HepG2 (cell line): ENCODE measurements at regions of chr17 and their contacts with region 1.

Region 1: DNA sequence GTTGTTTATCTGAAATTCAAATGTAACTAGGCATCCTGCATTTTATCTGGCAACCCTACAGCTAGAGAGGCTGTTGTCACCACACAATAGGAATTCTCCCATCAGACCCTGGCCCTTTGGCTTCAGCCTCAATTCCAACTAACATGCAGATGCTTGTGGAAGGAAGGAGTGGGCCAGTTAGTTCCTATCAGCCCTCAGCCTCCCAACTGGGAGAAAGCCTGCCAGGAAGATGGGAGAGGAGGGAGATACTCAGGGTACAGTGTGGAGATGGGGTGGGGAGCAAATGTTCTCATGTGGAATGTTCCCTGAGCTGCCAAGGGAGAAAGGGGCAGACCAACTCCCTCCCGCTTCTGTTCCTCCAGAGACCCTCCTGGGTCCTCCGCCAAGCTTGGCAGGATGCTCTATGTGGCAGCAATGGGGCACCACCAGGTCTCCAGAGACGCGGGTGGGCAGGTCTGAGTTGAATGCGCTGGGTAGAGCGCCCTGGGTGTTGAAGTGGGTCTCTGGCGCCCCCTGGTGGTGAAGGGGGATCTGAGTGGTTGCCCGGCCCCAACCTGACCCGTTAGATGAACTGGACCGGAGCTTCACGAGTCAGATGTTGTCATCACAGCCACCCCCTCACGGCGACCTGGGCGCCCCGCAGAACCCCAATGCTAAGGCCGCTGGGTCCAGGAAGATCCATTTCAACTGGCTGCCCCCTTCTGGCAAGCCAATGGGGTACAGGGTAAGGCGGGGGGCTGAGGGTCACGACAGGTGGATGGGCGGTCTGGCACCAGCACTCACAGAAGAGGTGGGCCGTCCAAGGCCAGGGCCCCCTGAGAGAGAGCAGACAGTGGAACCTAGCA is 15.2 kb downstream of the GALK1 start:
- DNase-seq: peak; percentile 67
- ATAC-seq: peak; percentile 59
- H3K4me3 ChIP-seq: peak overlapping the region in 1 of 3 experiments; percentile 64; a peak in 1 of 6 replicates
- H3K27ac ChIP-seq: no peak overlapping the region
- H3K4me1 ChIP-seq: peaks cover 46% of the 10 kb centered on the region
- H3K27me3 ChIP-seq: no peaks in the 10 kb centered on the region
- CTCF ChIP-seq: peak; percentile 98
- EP300 ChIP-seq: no peak
- POLR2A ChIP-seq: no peak
- RAD21 ChIP-seq: peak; percentile 93

Region 2: DNA sequence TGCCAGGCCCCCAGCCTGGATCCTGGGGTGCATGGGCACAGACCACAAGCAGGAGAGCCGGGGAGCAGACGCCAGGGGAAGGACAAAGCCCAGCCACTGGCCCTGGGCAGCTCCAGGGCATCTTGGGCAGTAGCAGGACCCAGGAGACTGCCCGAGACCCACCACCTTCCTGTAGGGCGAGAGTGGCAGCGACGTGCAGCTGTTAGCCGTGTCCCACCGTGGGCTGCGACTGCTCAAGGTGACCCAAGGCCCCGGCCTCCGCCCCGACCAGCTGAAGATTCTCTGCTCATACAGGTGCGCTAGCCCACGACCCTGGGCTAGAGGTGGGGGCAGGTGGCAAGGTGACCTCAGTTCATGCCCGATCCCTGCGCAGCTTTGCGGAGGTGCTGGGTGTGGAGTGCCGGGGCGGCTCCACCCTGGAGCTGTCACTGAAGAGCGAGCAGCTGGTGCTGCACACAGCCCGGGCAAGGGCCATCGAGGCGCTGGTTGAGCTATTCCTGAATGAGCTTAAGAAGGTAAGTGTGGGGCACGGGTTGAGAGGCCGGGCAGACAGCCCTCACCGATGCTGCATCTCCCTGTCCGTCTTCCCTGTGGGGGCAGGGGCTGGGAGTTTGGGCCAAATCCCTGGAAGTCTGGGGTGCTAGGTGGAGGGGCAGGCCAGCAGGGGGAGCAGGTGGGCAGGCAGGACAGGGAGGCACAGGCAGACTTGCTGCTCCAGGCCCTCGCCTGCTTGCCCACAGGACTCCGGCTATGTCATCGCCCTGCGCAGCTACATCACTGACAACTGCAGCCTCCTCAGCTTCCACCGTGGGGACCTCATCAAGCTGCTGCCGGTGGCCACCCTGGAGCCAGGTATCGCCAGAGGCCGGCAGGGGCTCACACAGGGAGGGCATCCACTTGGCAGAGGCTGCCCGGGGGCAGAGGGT is 130.0 kb before region 1 on chr17:
- CTCF ChIA-PET with region 1: no interaction called
- POLR2A ChIA-PET with region 1: interaction called, 3 read pairs
- in situ Hi-C with region 1: loop called (anchors 10 kb)
- intact Hi-C with region 1: loop called (anchors 5 kb)
- DNase-seq: peak; percentile 39
- ATAC-seq: peak; percentile 66
- H3K4me3 ChIP-seq: no peak overlapping the region
- H3K27ac ChIP-seq: no peak overlapping the region
- H3K4me1 ChIP-seq: peaks cover 12% of the 10 kb centered on the region
- H3K27me3 ChIP-seq: no peaks in the 10 kb centered on the region
- CTCF ChIP-seq: peak; percentile 86
- EP300 ChIP-seq: no peak
- POLR2A ChIP-seq: no peak
- RAD21 ChIP-seq: peak; percentile 49

Region 3: DNA sequence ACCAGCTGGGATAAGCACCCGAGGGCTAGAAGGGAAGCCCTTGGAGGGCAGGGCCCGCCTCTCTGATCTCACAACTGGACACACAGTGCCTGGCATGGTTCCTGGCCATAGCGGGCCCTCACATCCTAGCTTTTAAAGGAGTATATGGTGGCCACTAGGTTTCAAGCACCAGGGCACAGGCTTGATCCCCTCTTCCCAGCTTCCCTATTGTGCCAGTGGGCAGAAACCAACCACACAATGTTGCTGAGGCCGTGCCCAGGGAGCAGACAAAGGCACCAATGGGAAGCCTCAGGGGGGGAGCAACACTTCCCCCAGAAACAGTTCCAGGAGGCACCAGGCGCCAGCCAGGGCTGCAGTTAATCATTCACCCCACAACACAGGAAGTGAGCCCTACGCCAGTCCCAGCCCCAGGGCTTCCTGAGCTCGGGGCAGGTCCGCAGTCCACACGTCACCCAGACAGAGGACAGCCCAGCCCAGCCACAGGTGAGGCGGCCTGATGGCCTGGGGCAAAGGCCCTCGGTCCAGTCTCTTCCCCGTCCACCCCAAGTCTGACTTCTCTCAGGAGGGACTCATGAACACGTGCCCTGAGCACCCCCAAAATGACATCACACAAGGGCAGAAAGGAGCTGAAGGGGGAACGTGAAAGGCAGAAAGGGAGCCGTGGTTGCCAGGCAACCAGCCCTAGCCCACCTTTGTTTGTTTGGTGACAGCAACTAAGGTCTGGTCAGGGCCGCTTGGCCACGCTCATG is 103.7 kb before region 1 on chr17:
- CTCF ChIA-PET with region 1: no interaction called
- POLR2A ChIA-PET with region 1: interaction called, 11 read pairs
- in situ Hi-C with region 1: no loop called
- intact Hi-C with region 1: no loop called
- DNase-seq: peak; percentile 96
- ATAC-seq: peak; percentile 100
- H3K4me3 ChIP-seq: peak overlapping the region; percentile 45 to 67 (median 48); a peak in 5 of 6 replicates
- H3K27ac ChIP-seq: peak overlapping the region; percentile 85
- H3K4me1 ChIP-seq: peaks cover 25% of the 10 kb centered on the region
- H3K27me3 ChIP-seq: no peaks in the 10 kb centered on the region
- CTCF ChIP-seq: peak; percentile 52
- EP300 ChIP-seq: no peak
- POLR2A ChIP-seq: peak; percentile 90 to 93
- RAD21 ChIP-seq: no peak

Region 4: DNA sequence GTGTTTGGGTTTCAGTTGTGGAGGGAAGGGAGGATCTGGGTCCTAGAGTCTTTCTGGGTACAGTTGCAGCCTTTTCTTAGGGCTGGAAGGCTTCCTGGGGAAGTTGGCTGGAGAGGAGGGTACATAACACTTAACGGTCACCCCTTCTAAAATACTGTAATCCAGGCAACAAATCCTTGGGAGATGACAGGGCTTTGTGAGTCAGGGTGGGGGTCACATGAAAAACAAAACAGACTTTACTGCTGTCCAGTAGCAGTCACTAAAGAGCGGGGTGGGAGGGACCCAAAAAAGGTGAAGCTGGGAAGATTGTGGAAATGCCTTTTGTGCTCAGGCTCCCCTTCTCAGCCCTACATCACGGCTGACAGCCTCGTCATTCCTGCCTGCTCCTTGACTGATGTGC is 76.3 kb before region 1 on chr17:
- CTCF ChIA-PET with region 1: interaction called, 43 read pairs
- POLR2A ChIA-PET with region 1: interaction called, 6 read pairs
- in situ Hi-C with region 1: loop called (anchors 5 kb)
- intact Hi-C with region 1: loop called (anchors 1 kb)
- DNase-seq: no peak
- ATAC-seq: no peak
- H3K4me3 ChIP-seq: no peak overlapping the region
- H3K27ac ChIP-seq: no peak overlapping the region
- H3K4me1 ChIP-seq: peaks cover 18% of the 10 kb centered on the region
- H3K27me3 ChIP-seq: no peaks in the 10 kb centered on the region
- CTCF ChIP-seq: no peak
- EP300 ChIP-seq: no peak
- POLR2A ChIP-seq: no peak
- RAD21 ChIP-seq: no peak

Region 5: GRCh38 chr17:75764711-75765421 is 15.1 kb after region 1 on chr17 and contains the start of gene GALK1:
- CTCF ChIA-PET with region 1: interaction called, 12 read pairs
- POLR2A ChIA-PET with region 1: interaction called, 116 read pairs
- in situ Hi-C with region 1: no loop called
- intact Hi-C with region 1: no loop called
- DNase-seq: peak; percentile 59
- ATAC-seq: peak; percentile 73
- H3K4me3 ChIP-seq: peak within 1 kb of the TSS; percentile 77 to 87 (median 78)
- H3K27ac ChIP-seq: peak within 1 kb of the TSS; percentile 79
- H3K4me1 ChIP-seq: peaks cover 60% of the 10 kb centered on the region
- H3K27me3 ChIP-seq: no peaks in the 10 kb centered on the region
- CTCF ChIP-seq: peak; percentile 78
- EP300 ChIP-seq: no peak
- POLR2A ChIP-seq: peak in 1 of 2 experiments; percentile 73; a peak in 2 of 4 replicates
- RAD21 ChIP-seq: peak; percentile 46
- total RNA-seq, gene GALK1: 93.6 and 95.6 TPM in 2 replicates

Region 6: DNA sequence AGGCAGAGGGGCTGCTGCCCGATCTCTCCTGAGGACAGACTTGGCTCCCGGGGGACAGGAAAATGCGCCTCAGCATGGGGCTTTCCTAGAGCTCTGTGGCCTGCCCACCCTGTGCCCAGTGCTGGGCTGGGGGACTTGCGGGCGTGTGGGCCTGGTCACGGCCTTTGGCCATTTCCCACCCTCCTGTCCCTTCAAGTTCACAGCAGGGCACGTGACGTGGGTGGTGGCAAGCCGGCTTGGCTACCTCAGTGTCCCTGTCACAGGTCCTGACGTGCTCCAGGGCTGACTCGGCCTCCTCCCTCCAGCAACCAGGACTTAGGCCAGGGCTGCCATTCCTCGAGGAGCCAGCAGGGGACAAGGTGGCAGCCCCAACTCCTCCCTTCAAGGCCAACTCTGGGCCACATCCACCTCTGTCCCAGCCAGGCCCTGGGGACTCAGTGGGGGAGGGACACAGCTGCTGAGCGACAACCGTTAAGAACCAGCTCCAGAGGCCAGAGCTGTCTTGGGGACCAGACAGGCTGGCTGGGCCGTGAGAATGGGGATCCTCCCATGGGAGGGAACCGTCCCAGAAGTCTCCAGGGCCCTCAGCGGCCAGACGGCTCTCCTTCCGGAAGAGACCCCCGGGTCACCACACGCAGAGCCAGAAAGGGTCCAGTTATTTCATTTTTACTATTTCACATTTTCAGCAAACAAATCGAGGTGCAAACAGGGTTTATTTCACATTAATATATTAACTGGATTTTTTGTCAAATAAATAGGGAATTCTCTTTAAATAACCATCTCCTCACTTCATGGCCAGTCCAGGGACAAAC is 95.5 kb after region 1 on chr17:
- CTCF ChIA-PET with region 1: no interaction called
- POLR2A ChIA-PET with region 1: interaction called, 18 read pairs
- in situ Hi-C with region 1: no loop called
- intact Hi-C with region 1: no loop called
- DNase-seq: peak; percentile 86
- ATAC-seq: peak; percentile 65
- H3K4me3 ChIP-seq: peak overlapping the region; percentile 66 to 84 (median 66)
- H3K27ac ChIP-seq: peak overlapping the region; percentile 79
- H3K4me1 ChIP-seq: peaks cover 70% of the 10 kb centered on the region
- H3K27me3 ChIP-seq: no peaks in the 10 kb centered on the region
- CTCF ChIP-seq: peak; percentile 90
- EP300 ChIP-seq: peak in 1 of 2 experiments; percentile 31; a peak in 1 of 4 replicates
- POLR2A ChIP-seq: peak in 1 of 2 experiments; percentile 67; a peak in 2 of 4 replicates
- RAD21 ChIP-seq: peak; percentile 82

Region 7: GRCh38 chr17:75872434-75873351 is 122.9 kb after region 1 on chr17:
- CTCF ChIA-PET with region 1: no interaction called
- POLR2A ChIA-PET with region 1: interaction called, 11 read pairs
- in situ Hi-C with region 1: no loop called
- intact Hi-C with region 1: no loop called
- DNase-seq: peak; percentile 99
- ATAC-seq: peak; percentile 64
- H3K4me3 ChIP-seq: peak overlapping the region; percentile 13 to 62 (median 36); a peak in 5 of 6 replicates
- H3K27ac ChIP-seq: peak overlapping the region; percentile 97
- H3K4me1 ChIP-seq: peaks cover 88% of the 10 kb centered on the region
- H3K27me3 ChIP-seq: no peaks in the 10 kb centered on the region
- CTCF ChIP-seq: peak; percentile 43
- EP300 ChIP-seq: peak; percentile 81 to 87; a peak in 3 of 4 replicates
- POLR2A ChIP-seq: peak in 1 of 2 experiments; percentile 84; a peak in 2 of 4 replicates
- RAD21 ChIP-seq: peak; percentile 68

Region 8: GRCh38 chr17:76397687-76398487 is 648.1 kb after region 1 on chr17:
- CTCF ChIA-PET with region 1: no interaction called
- POLR2A ChIA-PET with region 1: no interaction called
- in situ Hi-C with region 1: no loop called
- intact Hi-C with region 1: no loop called
- DNase-seq: peak; percentile 80
- ATAC-seq: peak; percentile 87
- H3K4me3 ChIP-seq: no peak overlapping the region
- H3K27ac ChIP-seq: no peak overlapping the region
- H3K4me1 ChIP-seq: no peaks in the 10 kb centered on the region
- H3K27me3 ChIP-seq: no peaks in the 10 kb centered on the region
- CTCF ChIP-seq: peak; percentile 99
- EP300 ChIP-seq: no peak
- POLR2A ChIP-seq: no peak
- RAD21 ChIP-seq: peak; percentile 96